Lower leg skin (tissue), 4 donors: ENCODE measurements at regions of chr11 and their contacts with region 1.

Region 1: DNA sequence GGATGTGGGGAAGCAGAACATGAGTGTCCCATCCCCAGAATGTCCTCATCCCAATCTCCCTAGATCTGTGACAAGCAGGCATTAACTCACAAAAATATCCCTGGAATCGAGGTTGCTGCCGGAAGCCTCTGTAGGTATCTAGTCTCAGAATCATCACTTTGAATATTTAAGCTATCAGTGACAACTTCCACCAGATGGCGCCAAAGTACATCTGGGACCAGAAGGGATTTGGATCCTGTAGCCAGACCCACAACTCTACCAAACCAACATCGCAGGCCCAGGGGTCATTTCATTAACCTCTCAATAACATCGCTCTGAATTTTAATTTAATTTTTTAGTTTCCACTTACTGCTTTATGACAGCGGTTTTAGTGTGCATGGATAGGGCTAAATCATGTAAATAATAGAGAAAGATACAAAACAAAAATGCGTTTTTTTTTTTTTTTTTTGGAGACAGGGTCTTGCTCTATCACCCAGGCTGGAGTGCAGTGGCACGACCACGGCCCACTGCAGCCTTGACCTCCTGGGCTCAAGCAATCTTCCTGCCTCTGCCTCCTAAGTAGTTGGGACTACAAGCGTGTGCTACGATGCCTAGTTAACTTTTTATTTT is 1.1 kb upstream of the EXT2 start:
- DNase-seq: peak; percentile 85 to 95
- H3K4me3 ChIP-seq: no peak overlapping the region
- CTCF ChIP-seq: no peak
- POLR2A ChIP-seq: no peak

Region 2: GRCh38 chr11:44538375-44539054 is 444.2 kb after region 1 on chr11:
- intact Hi-C with region 1: loop called (anchors 5 kb)
- DNase-seq: peak; percentile 61 to 95
- H3K4me3 ChIP-seq: no peak overlapping the region
- CTCF ChIP-seq: peak in 1 of 3 donors; percentile 94
- POLR2A ChIP-seq: no peak